ENCODE measurements at regions of chr9 and their contacts with region 1.

Region 1: GRCh38 chr9:127770905-127771569 is 7.4 kb downstream of the SH2D3C start:
- DNase-seq: peak; percentile 98
- ATAC-seq: peak; percentile 91
- H3K4me3 Mint-ChIP-seq: peak overlapping the region; percentile 89
- H3K27ac Mint-ChIP-seq: peak overlapping the region; percentile 88
- H3K4me1 Mint-ChIP-seq: peaks cover 62% of the 10 kb centered on the region
- H3K27me3 Mint-ChIP-seq: no peaks in the 10 kb centered on the region

Region 2: DNA sequence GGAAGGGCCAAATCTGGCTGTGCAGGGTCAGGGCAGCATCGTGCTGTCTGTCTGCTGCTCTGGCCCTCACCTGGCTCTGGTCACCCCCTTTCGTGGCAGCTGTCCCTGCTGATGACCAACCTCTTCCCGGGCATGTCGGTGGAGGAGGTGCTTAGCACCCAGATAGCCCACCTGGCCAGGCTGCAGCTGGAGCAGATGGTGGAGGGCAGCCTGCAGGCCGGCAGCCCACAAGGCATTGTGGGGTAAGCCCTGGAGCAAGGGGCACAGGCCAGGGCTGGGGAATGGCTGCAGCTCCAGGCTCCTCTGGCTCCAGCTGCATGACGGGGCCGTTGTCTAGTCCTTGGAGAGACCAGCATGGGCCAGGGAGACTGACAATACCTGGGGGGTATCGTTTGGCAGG is 44.2 kb before region 1 on chr9:
- POLR2A ChIA-PET with region 1: no interaction called
- DNase-seq: no peak
- ATAC-seq: no peak
- H3K4me3 Mint-ChIP-seq: no peak overlapping the region
- H3K27ac Mint-ChIP-seq: no peak overlapping the region
- H3K4me1 Mint-ChIP-seq: peaks cover 4% of the 10 kb centered on the region
- H3K27me3 Mint-ChIP-seq: no peaks in the 10 kb centered on the region

Region 3: DNA sequence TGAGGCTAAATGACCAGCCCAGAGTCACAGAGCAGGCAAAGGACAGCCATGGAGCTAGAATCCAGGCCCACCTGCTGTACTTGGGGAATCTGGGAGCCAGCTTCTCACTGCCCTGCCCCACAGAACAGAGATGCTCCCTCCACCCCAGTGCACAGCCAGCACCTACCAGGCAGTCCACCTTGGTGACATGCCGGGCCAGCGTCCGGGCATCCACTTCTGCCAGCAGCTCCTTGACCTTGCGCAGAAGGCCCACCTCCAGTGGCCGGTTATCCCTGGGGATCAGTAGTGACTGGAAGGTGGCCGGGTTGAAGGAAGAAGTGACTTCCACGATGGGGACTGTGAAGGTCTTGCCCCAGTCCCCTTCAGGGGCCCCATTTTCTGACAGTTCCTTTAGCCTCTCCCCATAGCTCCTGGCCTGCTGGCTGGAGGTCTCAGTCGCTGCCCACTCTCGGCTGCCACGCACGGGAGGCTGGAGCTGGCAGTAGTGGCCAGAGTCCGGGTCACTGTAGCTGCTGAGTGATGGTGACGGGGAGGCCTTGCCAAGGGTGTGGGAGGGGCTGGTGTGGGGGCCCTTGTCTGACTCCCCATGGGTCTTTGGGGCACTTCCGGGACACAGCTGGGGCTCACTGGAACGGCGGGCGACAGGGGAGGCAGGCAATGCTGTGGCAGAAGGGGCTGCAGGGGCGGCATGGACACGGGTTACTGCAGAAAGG is 26.5 kb before region 1 on chr9:
- POLR2A ChIA-PET with region 1: interaction called, 11 read pairs
- DNase-seq: no peak
- ATAC-seq: no peak
- H3K4me3 Mint-ChIP-seq: no peak overlapping the region
- H3K27ac Mint-ChIP-seq: no peak overlapping the region
- H3K4me1 Mint-ChIP-seq: peaks cover 11% of the 10 kb centered on the region
- H3K27me3 Mint-ChIP-seq: no peaks in the 10 kb centered on the region

Region 4: GRCh38 chr9:127796225-127796813 is 25.3 kb after region 1 on chr9:
- POLR2A ChIA-PET with region 1: interaction called, 12 read pairs
- DNase-seq: no peak
- ATAC-seq: peak; percentile 11
- H3K4me3 Mint-ChIP-seq: peak overlapping the region; percentile 69
- H3K27ac Mint-ChIP-seq: peak overlapping the region; percentile 73
- H3K4me1 Mint-ChIP-seq: peaks cover 24% of the 10 kb centered on the region
- H3K27me3 Mint-ChIP-seq: no peaks in the 10 kb centered on the region

Region 5: DNA sequence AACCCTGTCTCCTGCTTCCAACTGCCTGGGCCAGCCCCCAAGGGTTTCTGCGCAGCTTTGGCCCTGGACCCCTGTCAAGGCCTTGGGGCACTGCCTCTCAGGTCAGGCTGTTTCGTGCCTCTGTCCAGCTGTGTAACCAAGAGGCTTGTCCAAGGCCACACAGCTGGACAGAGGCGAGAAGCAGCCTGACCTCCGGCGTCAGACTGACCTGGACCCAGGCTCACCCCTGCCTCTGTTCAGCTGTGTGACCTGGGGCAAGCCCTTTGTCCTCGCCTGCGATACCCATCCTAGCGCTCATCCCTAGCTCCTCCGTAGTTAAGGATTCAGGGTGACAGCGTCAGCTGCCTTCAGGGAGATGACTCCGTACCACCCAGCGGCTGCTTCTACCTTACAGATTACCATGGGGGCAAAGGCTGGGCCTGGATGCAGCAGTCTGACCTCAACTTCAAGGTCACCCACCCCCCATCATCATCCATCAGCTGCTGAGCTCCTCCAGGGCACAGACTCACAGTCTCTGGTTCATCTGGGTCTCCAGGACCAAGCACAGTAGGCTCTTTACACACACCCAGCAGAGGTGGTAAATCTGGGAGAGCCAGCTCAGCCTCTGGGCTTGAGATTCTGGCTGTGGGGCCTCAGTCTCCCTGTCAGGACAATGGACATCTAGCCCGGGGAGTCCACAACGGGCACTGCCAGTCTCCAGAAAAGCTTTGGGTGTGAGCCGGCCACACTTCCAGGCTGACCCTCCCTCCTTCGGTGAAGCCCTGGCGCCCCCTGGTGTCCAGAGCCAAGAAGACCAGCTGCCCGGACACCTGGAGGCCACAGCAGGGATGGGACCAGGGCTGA is 98.5 kb after region 1 on chr9:
- POLR2A ChIA-PET with region 1: interaction called, 19 read pairs
- DNase-seq: peak; percentile 88
- ATAC-seq: peak; percentile 70
- H3K4me3 Mint-ChIP-seq: no peak overlapping the region
- H3K27ac Mint-ChIP-seq: no peak overlapping the region
- H3K4me1 Mint-ChIP-seq: peaks cover 15% of the 10 kb centered on the region
- H3K27me3 Mint-ChIP-seq: no peaks in the 10 kb centered on the region

Region 6: GRCh38 chr9:127916665-127917613 is 145.9 kb after region 1 on chr9 and contains the start of gene ST6GALNAC4:
- POLR2A ChIA-PET with region 1: interaction called, 12 read pairs
- DNase-seq: peak; percentile 97
- ATAC-seq: peak; percentile 90
- H3K4me3 Mint-ChIP-seq: peak within 1 kb of the TSS; percentile 96
- H3K27ac Mint-ChIP-seq: peak within 1 kb of the TSS; percentile 96
- H3K4me1 Mint-ChIP-seq: peaks cover 41% of the 10 kb centered on the region
- H3K27me3 Mint-ChIP-seq: no peaks in the 10 kb centered on the region
- total RNA-seq, gene ST6GALNAC4: 51.1 to 59.5 TPM

Measured in activated naive CD8-positive, alpha-beta T cell treated with anti-CD3 and anti-CD28 coated beads, Interleukin-2, amount 10 ng/mL, durations not matched to agents 7 days and 5 days (primary cell).